ENCODE measurements at regions of chr20 and their contacts with region 1.

Region 1: GRCh38 chr20:34516247-34517113 is at the start of gene DYNLRB1:
- DNase-seq: peak; percentile 92
- H3K4me3 Mint-ChIP-seq: peak within 1 kb of the TSS; percentile 99
- H3K27ac Mint-ChIP-seq: peak within 1 kb of the TSS; percentile 96
- H3K4me1 Mint-ChIP-seq: peaks cover 22% of the 10 kb centered on the region
- H3K27me3 Mint-ChIP-seq: no peaks in the 10 kb centered on the region
- total RNA-seq, gene DYNLRB1: 104 and 112 TPM in 2 replicates

Region 2: GRCh38 chr20:33992923-33993575 is 523.4 kb before region 1 on chr20:
- intact Hi-C with region 1: loop called (anchors 10 kb)
- DNase-seq: peak; percentile 99
- H3K4me3 Mint-ChIP-seq: peak overlapping the region; percentile 91
- H3K27ac Mint-ChIP-seq: peak overlapping the region; percentile 84
- H3K4me1 Mint-ChIP-seq: peaks cover 40% of the 10 kb centered on the region
- H3K27me3 Mint-ChIP-seq: no peaks in the 10 kb centered on the region

Region 3: DNA sequence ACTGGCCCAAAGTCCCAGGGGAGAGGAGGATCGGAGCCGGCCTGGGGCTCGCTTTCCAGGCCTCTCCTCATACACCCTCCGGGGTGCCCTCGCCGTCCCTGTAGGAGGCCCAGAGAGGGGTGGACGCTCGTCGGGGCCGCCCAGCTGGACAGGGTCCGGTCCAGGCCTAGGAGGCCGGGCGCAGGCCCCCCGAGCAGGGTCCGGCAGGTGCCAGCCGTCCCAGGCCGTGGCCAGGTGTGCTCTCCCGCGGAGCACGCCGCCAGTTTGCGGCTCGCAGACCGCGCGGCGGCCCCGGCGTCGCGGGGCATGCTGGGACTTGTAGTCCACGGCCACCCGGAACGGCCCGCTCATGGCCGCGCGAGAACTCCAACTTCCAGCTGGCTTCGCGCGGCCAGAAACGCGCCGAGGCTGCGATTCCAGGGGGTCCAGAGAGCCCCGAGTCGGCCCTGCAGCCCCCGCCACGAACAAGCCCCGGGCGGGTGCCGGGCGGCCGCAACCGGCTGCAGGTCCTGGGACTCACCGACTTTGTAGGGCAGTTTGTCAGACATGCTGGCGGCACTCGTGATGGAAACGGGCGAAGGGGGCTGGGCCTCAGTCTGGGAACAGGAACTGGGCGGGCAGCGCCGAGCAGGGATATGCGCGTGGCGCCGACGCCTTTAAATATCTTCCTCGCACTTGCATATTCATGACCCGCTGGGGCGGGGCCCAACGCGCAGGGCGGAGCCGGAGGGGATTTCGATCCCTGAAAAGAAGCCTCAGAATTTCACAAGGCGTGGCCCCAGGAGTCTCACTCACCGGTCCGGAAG is 213.6 kb before region 1 on chr20 and contains the start of gene AHCY:
- intact Hi-C with region 1: loop called (anchors 2 kb)
- DNase-seq: peak; percentile 93
- H3K4me3 Mint-ChIP-seq: peak within 1 kb of the TSS; percentile 87
- H3K27ac Mint-ChIP-seq: peak within 1 kb of the TSS; percentile 88
- H3K4me1 Mint-ChIP-seq: peaks cover 13% of the 10 kb centered on the region
- H3K27me3 Mint-ChIP-seq: peaks cover 1% of the 10 kb centered on the region
- total RNA-seq, gene AHCY: 120 and 122 TPM in 2 replicates

Region 4: GRCh38 chr20:34312544-34313217 is 203.8 kb before region 1 on chr20:
- intact Hi-C with region 1: loop called (anchors 1 kb)
- DNase-seq: peak; percentile 80
- H3K4me3 Mint-ChIP-seq: no peak overlapping the region
- H3K27ac Mint-ChIP-seq: no peak overlapping the region
- H3K4me1 Mint-ChIP-seq: peaks cover 14% of the 10 kb centered on the region
- H3K27me3 Mint-ChIP-seq: peaks cover 28% of the 10 kb centered on the region

Region 5: GRCh38 chr20:34363062-34363464 is 153.4 kb before region 1 on chr20 and contains the start of gene ITCH:
- intact Hi-C with region 1: loop called (anchors 2 kb)
- DNase-seq: peak; percentile 90
- H3K4me3 Mint-ChIP-seq: peak within 1 kb of the TSS; percentile 87
- H3K27ac Mint-ChIP-seq: peak within 1 kb of the TSS; percentile 93
- H3K4me1 Mint-ChIP-seq: peaks cover 25% of the 10 kb centered on the region
- H3K27me3 Mint-ChIP-seq: no peaks in the 10 kb centered on the region
- total RNA-seq, gene ITCH: 52.5 and 53.0 TPM in 2 replicates

Region 6: GRCh38 chr20:34528921-34529297 is 12.4 kb after region 1 on chr20:
- intact Hi-C with region 1: no loop called
- DNase-seq: no peak
- H3K4me3 Mint-ChIP-seq: no peak overlapping the region
- H3K27ac Mint-ChIP-seq: no peak overlapping the region
- H3K4me1 Mint-ChIP-seq: peaks cover 1% of the 10 kb centered on the region
- H3K27me3 Mint-ChIP-seq: no peaks in the 10 kb centered on the region

Region 7: GRCh38 chr20:34676642-34677373 is 160.3 kb after region 1 on chr20 and contains the start of gene PIGU:
- intact Hi-C with region 1: loop called (anchors 5 kb)
- DNase-seq: peak; percentile 96
- H3K4me3 Mint-ChIP-seq: peak within 1 kb of the TSS; percentile 93
- H3K27ac Mint-ChIP-seq: peak within 1 kb of the TSS; percentile 96
- H3K4me1 Mint-ChIP-seq: peaks cover 17% of the 10 kb centered on the region
- H3K27me3 Mint-ChIP-seq: no peaks in the 10 kb centered on the region
- total RNA-seq, gene PIGU: 24.9 and 25.7 TPM in 2 replicates

Region 8: GRCh38 chr20:34709044-34709830 is 192.8 kb after region 1 on chr20:
- intact Hi-C with region 1: loop called (anchors 1 kb)
- DNase-seq: peak; percentile 77
- H3K4me3 Mint-ChIP-seq: peak overlapping the region; percentile 84
- H3K27ac Mint-ChIP-seq: peak overlapping the region; percentile 89
- H3K4me1 Mint-ChIP-seq: peaks cover 33% of the 10 kb centered on the region
- H3K27me3 Mint-ChIP-seq: no peaks in the 10 kb centered on the region

Measured in activated T-helper 2 cell treated with anti-CD3 and anti-CD28 coated beads, Interferon-gamma antibody, Interleukin-2, Interleukin-4, amounts not matched to agents 10 μg/mL and 5 μg/mL and 100 μg/mL, durations not matched to agents 14 hours and 24 hours and 36 hours (primary cell).